CD4-positive, alpha-beta memory T cell (primary cell): ENCODE measurements at regions of chr5 and their contacts with region 1.

Region 1: DNA sequence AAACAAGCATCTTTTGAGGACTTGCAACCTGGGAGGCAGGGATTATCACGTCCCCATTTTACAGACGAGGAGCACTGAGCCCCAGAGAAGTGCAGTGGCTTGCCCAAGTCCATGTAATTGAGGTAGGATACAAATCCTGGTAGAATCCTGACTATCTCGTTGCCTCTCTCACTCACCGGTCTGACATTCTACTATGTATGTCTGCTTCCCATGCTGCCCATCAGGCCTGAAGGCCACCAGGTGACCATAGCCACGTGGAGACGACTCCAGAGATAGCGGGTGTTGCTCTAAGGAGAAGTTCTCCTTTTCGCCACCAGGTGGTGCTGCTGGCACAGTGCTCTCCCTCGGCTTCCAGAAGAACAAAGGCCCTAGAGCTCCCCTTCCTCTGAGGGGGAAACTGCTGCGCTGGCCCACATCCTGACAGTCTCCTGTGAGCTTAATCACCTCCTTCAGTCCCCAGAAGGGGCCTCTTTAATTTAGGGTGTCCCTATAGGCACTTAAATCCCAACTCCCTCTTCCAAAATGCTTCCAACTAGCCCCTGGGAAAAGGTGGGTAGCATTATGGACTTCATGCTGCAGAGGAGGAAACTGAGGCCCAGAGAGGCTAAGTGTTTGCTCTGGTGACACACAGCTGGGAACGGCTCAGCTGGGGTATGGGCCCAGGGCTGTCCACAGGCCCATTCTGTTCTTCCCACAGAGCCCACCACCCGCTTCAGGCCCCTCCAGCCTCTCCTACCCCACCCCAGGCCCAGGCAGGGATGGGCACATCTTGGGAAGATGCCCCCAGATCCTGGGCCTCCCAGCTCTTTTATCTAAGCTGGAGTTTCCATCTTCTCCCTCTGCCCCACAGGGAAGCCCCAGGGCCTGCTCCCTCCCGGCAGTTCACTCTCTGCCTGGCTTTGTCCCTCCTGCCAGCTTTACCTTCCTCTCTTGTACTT is 6.4 kb downstream of the SLC34A1 start:
- DNase-seq: peak; percentile 86 to 89 (median 88)
- H3K4me3 ChIP-seq: no peak overlapping the region
- H3K4me3 Mint-ChIP-seq: peak overlapping the region in 7 of 8 donors; percentile 68 to 88 (median 79)
- H3K27ac ChIP-seq: peak overlapping the region; percentile 71
- H3K27ac Mint-ChIP-seq: peak overlapping the region; percentile 79 to 98 (median 96)
- H3K4me1 ChIP-seq: peaks cover 49% of the 10 kb centered on the region
- H3K4me1 Mint-ChIP-seq: peaks cover 31 to 58% (median 38%) of the 10 kb centered on the region in 4 donors
- H3K27me3 ChIP-seq: no peaks in the 10 kb centered on the region
- H3K27me3 Mint-ChIP-seq: no peaks in the 10 kb centered on the region

Region 2: DNA sequence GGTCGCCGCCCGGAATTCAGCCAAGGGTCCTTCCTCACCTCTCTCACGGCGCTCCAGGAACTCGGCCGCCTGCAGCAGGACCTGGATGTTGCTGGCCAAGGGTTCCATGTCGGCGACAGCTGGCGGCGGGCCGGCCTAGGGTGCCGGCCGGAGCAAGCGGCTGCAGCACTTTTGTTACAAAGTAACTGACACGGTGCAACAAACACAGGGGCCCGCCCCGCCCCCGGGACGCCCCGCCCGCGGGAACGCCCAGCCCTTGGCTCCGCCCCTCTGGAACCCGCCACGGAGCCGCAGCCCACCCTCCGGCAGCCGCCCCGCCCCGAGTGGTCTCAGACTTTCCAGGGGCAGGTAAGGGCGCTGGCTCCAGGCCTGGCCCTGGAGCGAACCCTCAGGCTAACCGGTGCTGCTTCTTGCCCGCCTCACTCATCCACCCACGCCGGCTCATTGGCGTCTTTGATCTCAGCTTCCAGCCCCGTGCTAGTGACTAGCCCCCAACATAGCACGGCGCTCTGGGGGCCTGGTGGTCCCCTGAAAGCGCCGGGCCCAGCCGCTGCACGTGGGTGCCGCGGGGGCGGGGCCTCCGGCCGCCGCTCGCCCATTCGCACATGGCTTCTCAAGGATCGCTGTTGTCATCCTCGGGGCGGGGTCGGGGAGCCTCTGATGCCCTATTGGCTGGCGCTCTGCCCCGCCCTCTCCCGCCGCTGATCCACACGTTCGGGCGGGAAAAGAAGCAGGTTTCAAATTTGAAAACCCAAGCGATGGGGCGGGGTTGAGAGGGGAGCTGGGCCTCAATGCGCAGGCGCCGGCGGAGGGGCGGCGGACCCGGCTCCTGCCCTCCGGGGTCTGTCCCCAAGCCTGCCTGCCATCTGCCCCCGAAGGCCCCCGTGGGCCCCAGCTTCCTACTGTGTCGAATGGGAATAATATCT is 78.6 kb before region 1 on chr5 and contains the start of gene MXD3:
- CTCF ChIA-PET with region 1: interaction called, 63 read pairs
- POLR2A ChIA-PET with region 1: interaction called, 4 read pairs
- intact Hi-C with region 1: no loop called
- DNase-seq: peak; percentile 90 to 96 (median 93)
- H3K4me3 ChIP-seq: peak within 1 kb of the TSS; percentile 24 to 64
- H3K4me3 Mint-ChIP-seq: peak within 1 kb of the TSS; percentile 70 to 86 (median 80)
- H3K27ac ChIP-seq: peak within 1 kb of the TSS; percentile 49
- H3K27ac Mint-ChIP-seq: peak within 1 kb of the TSS; percentile 29 to 83 (median 75)
- H3K4me1 ChIP-seq: peaks cover 41% of the 10 kb centered on the region
- H3K4me1 Mint-ChIP-seq: peaks cover 17 to 49% (median 30%) of the 10 kb centered on the region in 4 donors
- H3K27me3 ChIP-seq: no peaks in the 10 kb centered on the region
- H3K27me3 Mint-ChIP-seq: no peaks in the 10 kb centered on the region
- total RNA-seq, gene MXD3: 17.3 TPM

Region 3: DNA sequence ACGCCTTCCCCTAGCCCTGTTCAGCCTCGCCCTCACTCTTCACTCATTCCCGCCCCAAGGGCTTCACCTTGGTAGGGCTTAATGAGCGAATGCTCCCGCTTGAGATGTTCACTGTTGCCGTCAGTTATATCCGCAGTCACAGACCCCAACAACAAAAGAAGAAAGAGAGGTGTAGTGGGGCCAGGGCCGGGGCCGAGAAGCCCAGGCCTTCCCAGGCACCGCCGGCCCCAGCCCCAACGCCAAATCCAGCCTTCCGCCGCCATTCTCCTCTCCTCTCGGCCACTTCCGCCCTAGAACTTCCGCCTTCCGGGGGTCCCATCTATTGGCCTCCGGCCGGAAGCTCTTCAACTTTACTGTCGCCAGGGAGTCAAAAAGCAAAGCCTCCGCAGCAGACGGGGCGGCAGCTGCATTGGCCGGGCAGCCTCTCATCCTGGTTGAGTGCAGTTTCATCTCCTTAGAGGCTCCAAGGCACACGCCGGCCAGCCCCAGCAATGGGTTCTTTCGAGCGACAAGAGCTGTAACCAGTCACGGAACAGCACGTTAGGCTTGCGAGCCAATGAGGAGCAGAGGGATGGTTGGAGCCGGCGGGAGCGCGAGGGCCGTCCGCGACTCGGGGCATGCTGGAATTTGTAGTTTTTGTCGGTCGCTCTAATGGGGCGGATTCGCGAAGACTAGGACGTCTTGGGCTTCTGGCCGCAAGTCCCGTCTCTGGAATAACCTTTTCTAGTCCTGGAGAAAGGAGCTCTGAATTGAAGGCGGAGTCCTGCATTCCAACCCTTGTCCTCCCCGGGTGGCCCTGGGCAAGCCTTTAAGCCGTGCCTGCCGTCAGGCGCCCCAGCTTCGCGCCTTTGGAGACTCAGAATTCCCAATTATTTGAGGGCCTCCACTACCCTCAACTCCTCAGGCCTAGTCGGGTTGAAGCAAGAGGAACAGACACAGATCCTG is 39.0 kb before region 1 on chr5 and contains the start of gene LMAN2:
- CTCF ChIA-PET with region 1: interaction called, 21 read pairs
- POLR2A ChIA-PET with region 1: interaction called, 39 read pairs
- intact Hi-C with region 1: loop called (anchors 5 kb)
- DNase-seq: peak; percentile 93 to 95 (median 94)
- H3K4me3 ChIP-seq: peak within 1 kb of the TSS; percentile 91 to 99
- H3K4me3 Mint-ChIP-seq: peak within 1 kb of the TSS; percentile 91 to 100 (median 97)
- H3K27ac ChIP-seq: peak within 1 kb of the TSS; percentile 93
- H3K27ac Mint-ChIP-seq: peak within 1 kb of the TSS; percentile 97 to 100 (median 99)
- H3K4me1 ChIP-seq: peaks cover 62% of the 10 kb centered on the region
- H3K4me1 Mint-ChIP-seq: peaks cover 42 to 81% (median 63%) of the 10 kb centered on the region in 4 donors
- H3K27me3 ChIP-seq: no peaks in the 10 kb centered on the region
- H3K27me3 Mint-ChIP-seq: no peaks in the 10 kb centered on the region
- total RNA-seq, gene LMAN2: 114 to 123 TPM

Region 4: GRCh38 chr5:177362610-177363507 is 27.8 kb before region 1 on chr5:
- CTCF ChIA-PET with region 1: interaction called, 140 read pairs
- POLR2A ChIA-PET with region 1: interaction called, 34 read pairs
- intact Hi-C with region 1: loop called (anchors 5 kb)
- DNase-seq: peak; percentile 54 to 86 (median 61)
- H3K4me3 ChIP-seq: peak overlapping the region; percentile 11 to 52
- H3K4me3 Mint-ChIP-seq: peak overlapping the region; percentile 81 to 89 (median 85)
- H3K27ac ChIP-seq: peak overlapping the region; percentile 81
- H3K27ac Mint-ChIP-seq: peak overlapping the region; percentile 86 to 97 (median 92)
- H3K4me1 ChIP-seq: peaks cover 81% of the 10 kb centered on the region
- H3K4me1 Mint-ChIP-seq: peaks cover 40 to 76% (median 59%) of the 10 kb centered on the region in 4 donors
- H3K27me3 ChIP-seq: no peaks in the 10 kb centered on the region
- H3K27me3 Mint-ChIP-seq: no peaks in the 10 kb centered on the region

Region 5: DNA sequence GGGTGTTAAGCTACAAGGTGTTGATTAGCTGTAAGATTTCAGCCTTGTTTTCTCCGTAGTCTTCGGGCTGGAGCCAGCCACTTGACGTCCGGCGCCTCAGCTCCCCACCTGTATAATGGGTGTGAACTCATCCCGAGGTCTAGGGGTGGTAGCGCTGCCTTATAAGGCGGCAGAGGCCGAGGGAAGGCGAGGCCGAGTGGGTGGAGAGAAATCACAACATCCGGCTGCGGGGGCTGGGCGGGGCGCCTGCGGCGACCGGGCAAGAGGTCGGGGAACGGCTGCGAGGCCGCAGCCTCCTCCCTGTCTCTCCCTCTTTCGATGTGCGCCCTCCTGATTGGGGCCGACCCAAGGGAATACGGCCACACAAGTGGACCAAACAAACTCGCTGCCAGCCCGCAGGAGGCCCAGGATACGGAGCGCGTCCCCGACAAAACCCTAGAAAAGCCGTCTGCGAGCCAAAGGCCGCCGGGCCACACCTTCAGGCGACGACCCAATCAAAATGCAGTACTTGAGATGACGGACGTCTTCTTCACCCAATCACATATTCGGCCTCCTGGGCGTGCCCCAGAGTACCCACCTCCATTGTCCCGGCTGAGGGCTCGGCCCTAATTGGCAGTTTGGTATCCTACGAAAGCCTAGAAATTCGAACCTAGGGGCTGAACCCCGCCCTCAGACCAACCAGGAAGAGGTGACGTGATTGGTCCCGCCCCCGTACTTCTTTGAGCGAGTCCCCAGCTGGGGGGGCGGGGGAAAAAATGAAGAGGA is 35.4 kb after region 1 on chr5:
- CTCF ChIA-PET with region 1: interaction called, 55 read pairs
- POLR2A ChIA-PET with region 1: interaction called, 78 read pairs
- intact Hi-C with region 1: no loop called
- DNase-seq: peak; percentile 99 to 100 (median 100)
- H3K4me3 ChIP-seq: peak overlapping the region; percentile 21 to 53
- H3K4me3 Mint-ChIP-seq: peak overlapping the region; percentile 89 to 96 (median 92)
- H3K27ac ChIP-seq: peak overlapping the region; percentile 65
- H3K27ac Mint-ChIP-seq: peak overlapping the region; percentile 91 to 99 (median 99)
- H3K4me1 ChIP-seq: peaks cover 52% of the 10 kb centered on the region
- H3K4me1 Mint-ChIP-seq: peaks cover 31 to 65% (median 44%) of the 10 kb centered on the region in 4 donors
- H3K27me3 ChIP-seq: no peaks in the 10 kb centered on the region
- H3K27me3 Mint-ChIP-seq: no peaks in the 10 kb centered on the region

Region 6: DNA sequence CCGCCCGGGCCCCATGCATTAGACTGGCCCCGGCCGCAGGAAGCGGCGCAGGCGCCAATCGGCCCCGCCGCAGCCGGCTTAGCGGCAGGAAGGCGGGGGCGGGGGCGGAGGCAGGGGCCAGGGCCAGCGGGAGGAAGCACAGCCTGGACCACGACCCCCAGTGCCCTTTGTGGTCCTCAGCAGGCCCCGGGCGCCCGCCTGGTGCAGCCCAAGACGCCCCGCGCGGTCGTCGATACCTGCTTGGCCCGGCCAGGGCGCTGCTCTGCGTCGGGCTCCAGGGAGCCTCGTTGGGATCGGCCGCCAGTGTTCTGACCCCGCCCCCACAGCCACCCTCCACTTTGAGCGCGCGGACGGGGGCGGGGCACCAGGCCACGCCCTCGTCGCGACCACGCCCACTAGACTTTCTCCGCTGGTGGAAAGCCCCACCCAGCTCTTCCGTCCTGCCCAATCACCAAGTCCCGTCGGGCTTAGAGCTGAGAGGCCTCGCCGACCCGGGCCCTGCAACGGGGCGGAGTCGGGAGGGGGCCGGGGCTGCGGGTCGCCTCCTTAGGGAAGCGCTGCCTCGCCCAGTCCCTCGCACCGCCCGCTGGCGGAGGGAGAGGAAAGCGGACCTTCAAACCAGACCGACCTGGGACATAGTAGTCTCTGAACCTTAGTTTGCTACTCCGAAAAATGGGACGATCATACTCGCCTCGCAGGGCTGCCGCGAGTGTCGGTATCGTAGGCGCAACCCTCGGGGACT is 106.8 kb after region 1 on chr5 and contains the start of gene PDLIM7:
- CTCF ChIA-PET with region 1: interaction called, 110 read pairs
- POLR2A ChIA-PET with region 1: interaction called, 14 read pairs
- intact Hi-C with region 1: loop called (anchors 1 kb)
- DNase-seq: peak; percentile 91 to 94 (median 92)
- H3K4me3 ChIP-seq: peak within 1 kb of the TSS; percentile 65 to 75
- H3K4me3 Mint-ChIP-seq: peak within 1 kb of the TSS; percentile 84 to 93 (median 88)
- H3K27ac ChIP-seq: peak within 1 kb of the TSS; percentile 49
- H3K27ac Mint-ChIP-seq: peak within 1 kb of the TSS; percentile 57 to 92 (median 85)
- H3K4me1 ChIP-seq: peaks cover 11% of the 10 kb centered on the region
- H3K4me1 Mint-ChIP-seq: peaks cover 8 to 26% (median 20%) of the 10 kb centered on the region in 4 donors
- H3K27me3 ChIP-seq: no peaks in the 10 kb centered on the region
- H3K27me3 Mint-ChIP-seq: no peaks in the 10 kb centered on the region
- total RNA-seq, gene PDLIM7: 5.8 to 7.3 TPM